Gastrocnemius medialis (tissue), 4 donors: ENCODE measurements at regions of chr3 and their contacts with region 1.

Region 1: GRCh38 chr3:183766745-183767606 is 58.4 kb downstream of the MAP6D1 start:
- DNase-seq: peak; percentile 61 to 69
- ATAC-seq: peak; percentile 61 to 86
- H3K4me3 ChIP-seq: no peak overlapping the region
- H3K27ac ChIP-seq: peak overlapping the region in 2 of 4 donors; percentile 12 to 35
- H3K4me1 ChIP-seq: peaks cover 0 to 6% of the 10 kb centered on the region in 2 donors
- H3K27me3 ChIP-seq: no peaks in the 10 kb centered on the region
- CTCF ChIP-seq: peak; percentile 77 to 90 (median 83)
- POLR2A ChIP-seq: no peak

Region 2: GRCh38 chr3:183148056-183148455 is 618.9 kb before region 1 on chr3:
- in situ Hi-C with region 1: loop called in 1 of 4 experiments (anchors 25 kb)
- intact Hi-C with region 1: no loop called
- DNase-seq: no peak
- ATAC-seq: no peak
- H3K4me3 ChIP-seq: no peak overlapping the region
- H3K27ac ChIP-seq: no peak overlapping the region
- H3K4me1 ChIP-seq: no peaks in the 10 kb centered on the region
- H3K27me3 ChIP-seq: no peaks in the 10 kb centered on the region
- CTCF ChIP-seq: no peak
- POLR2A ChIP-seq: no peak

Region 3: GRCh38 chr3:183460081-183461055 is 306.6 kb before region 1 on chr3:
- in situ Hi-C with region 1: loop called (anchors 5 to 10 kb)
- intact Hi-C with region 1: no loop called
- DNase-seq: no peak
- ATAC-seq: no peak
- H3K4me3 ChIP-seq: no peak overlapping the region
- H3K27ac ChIP-seq: no peak overlapping the region
- H3K4me1 ChIP-seq: no peaks in the 10 kb centered on the region
- H3K27me3 ChIP-seq: no peaks in the 10 kb centered on the region
- CTCF ChIP-seq: no peak
- POLR2A ChIP-seq: no peak

Region 4: GRCh38 chr3:183468424-183468823 is 298.6 kb before region 1 on chr3:
- in situ Hi-C with region 1: loop called (anchors 5 to 10 kb)
- intact Hi-C with region 1: loop called (anchors 1 kb)
- DNase-seq: no peak
- ATAC-seq: no peak
- H3K4me3 ChIP-seq: no peak overlapping the region
- H3K27ac ChIP-seq: no peak overlapping the region
- H3K4me1 ChIP-seq: peaks cover 0 to 9% of the 10 kb centered on the region in 2 donors
- H3K27me3 ChIP-seq: no peaks in the 10 kb centered on the region
- CTCF ChIP-seq: no peak
- POLR2A ChIP-seq: no peak

Region 5: GRCh38 chr3:183502237-183503181 is 264.5 kb before region 1 on chr3:
- in situ Hi-C with region 1: loop called in 2 of 4 experiments (anchors 10 kb)
- intact Hi-C with region 1: loop called (anchors 1 kb)
- DNase-seq: peak; percentile 16 to 41
- ATAC-seq: peak; percentile 74 to 88
- H3K4me3 ChIP-seq: no peak overlapping the region
- H3K27ac ChIP-seq: no peak overlapping the region
- H3K4me1 ChIP-seq: peaks cover 4 to 20% of the 10 kb centered on the region in 2 donors
- H3K27me3 ChIP-seq: no peaks in the 10 kb centered on the region
- CTCF ChIP-seq: peak in 4 of 5 experiments; percentile 13 to 55 (median 32)
- POLR2A ChIP-seq: no peak

Region 6: GRCh38 chr3:183868796-183869195 is 101.8 kb after region 1 on chr3:
- in situ Hi-C with region 1: no loop called
- intact Hi-C with region 1: no loop called
- DNase-seq: no peak
- ATAC-seq: no peak
- H3K4me3 ChIP-seq: no peak overlapping the region
- H3K27ac ChIP-seq: no peak overlapping the region
- H3K4me1 ChIP-seq: peaks cover 5 to 16% of the 10 kb centered on the region in 2 donors
- H3K27me3 ChIP-seq: no peaks in the 10 kb centered on the region
- CTCF ChIP-seq: no peak
- POLR2A ChIP-seq: no peak